ENCODE measurements at regions of chr16 and their contacts with region 1.

Region 1: DNA sequence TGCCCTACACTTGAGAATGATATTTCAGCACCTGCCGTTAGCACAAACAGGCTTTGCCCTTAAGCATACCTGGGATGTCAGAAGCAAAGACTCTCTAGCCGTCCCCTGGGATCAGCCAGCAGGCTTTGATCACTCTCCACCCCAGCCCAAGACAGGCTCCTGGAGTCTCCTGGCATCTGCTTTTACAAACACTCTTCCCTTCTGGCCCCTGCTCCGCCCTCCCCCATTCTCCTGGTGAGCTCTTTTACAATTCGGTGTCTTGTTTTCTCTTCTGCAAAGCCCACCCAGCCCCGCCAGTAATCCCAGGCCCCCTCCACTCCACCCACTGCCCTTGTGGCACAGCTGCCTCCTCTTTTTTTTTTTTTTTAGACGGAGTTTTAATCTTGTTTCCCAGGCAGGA is 50.4 kb downstream of the KATNIP start:
- DNase-seq: no peak
- H3K4me3 ChIP-seq: no peak overlapping the region
- H3K27ac ChIP-seq: no peak overlapping the region
- H3K4me1 ChIP-seq: no peaks in the 10 kb centered on the region
- H3K27me3 ChIP-seq: no peaks in the 10 kb centered on the region
- CTCF ChIP-seq: no peak
- POLR2A ChIP-seq: no peak

Region 2: DNA sequence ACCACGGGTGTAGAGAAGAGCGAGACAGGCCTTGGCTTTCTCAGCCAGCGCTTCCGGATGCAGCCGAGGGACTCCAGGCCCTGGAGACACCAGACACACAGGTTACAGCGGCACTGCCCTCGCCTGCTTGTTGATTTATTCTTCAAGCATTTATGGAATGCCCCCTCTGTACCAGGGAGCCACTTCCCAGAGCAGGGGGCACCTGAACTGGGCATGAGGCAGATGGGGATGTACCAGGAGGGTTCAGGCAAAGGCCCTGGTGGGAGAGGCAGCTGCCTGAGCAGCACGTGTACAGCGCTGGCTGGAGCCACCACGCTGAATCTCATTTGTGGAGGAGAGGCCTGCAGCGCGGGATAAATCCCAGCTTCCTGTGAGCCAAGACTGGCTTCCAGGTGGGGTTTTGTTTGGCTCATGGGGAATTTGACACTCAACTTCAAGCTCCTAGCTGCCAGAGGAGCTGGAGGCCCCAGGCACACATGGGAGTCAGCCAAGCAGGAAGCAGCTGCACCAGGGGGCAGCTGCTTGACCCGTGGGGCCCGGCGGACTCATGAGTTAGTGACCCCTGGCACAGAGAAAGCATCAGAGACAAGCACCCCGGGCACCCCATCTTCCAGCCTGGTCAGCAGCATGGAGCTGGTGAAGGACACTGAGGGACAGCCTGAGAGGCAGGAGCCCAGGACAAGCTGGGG is 138.8 kb before region 1 on chr16:
- intact Hi-C with region 1: no loop called
- DNase-seq: no peak
- H3K4me3 ChIP-seq: no peak overlapping the region
- H3K27ac ChIP-seq: peak overlapping the region in 2 of 5 donors; percentile 57 to 69
- H3K4me1 ChIP-seq: peaks cover 8 to 18% of the 10 kb centered on the region in 2 donors
- H3K27me3 ChIP-seq: no peaks in the 10 kb centered on the region
- CTCF ChIP-seq: no peak
- POLR2A ChIP-seq: no peak

Region 3: DNA sequence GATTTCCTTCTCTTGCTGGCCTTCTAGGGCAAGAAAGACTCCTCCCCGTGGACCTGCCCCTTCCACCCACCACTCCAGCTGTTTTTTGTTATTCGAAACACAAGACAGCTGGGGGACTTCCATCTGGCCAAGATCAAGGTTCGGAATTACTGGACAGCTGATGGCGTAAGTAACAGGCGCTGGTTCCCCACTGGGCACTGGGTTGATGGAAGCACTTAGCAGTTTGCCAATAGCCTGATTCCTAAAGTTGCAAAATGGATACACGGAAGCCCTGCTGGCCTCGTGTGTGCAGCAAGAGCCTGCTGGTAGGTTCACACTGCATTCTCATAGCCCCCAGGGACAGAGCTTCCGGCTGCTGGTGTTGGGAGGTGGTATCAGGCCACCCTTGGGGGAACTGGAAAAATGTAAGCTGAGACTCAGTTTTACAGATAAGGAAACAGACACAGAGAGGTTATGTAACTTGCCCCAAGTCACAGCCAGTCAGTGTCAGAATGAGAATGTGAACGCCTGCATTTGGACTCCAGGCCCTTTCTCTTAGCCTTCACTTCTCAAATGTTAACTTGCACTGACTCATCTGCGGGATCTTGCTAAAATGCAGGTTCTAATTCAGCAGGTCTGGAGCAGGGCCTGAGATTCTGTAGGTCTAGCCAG is 121.3 kb after region 1 on chr16:
- intact Hi-C with region 1: no loop called
- DNase-seq: peak in 6 of 7 donors; percentile 25 to 82 (median 52)
- H3K4me3 ChIP-seq: no peak overlapping the region
- H3K27ac ChIP-seq: peak overlapping the region in 2 of 5 donors; percentile 59 to 91
- H3K4me1 ChIP-seq: no peaks in the 10 kb centered on the region
- H3K27me3 ChIP-seq: no peaks in the 10 kb centered on the region
- CTCF ChIP-seq: no peak
- POLR2A ChIP-seq: no peak

Region 4: DNA sequence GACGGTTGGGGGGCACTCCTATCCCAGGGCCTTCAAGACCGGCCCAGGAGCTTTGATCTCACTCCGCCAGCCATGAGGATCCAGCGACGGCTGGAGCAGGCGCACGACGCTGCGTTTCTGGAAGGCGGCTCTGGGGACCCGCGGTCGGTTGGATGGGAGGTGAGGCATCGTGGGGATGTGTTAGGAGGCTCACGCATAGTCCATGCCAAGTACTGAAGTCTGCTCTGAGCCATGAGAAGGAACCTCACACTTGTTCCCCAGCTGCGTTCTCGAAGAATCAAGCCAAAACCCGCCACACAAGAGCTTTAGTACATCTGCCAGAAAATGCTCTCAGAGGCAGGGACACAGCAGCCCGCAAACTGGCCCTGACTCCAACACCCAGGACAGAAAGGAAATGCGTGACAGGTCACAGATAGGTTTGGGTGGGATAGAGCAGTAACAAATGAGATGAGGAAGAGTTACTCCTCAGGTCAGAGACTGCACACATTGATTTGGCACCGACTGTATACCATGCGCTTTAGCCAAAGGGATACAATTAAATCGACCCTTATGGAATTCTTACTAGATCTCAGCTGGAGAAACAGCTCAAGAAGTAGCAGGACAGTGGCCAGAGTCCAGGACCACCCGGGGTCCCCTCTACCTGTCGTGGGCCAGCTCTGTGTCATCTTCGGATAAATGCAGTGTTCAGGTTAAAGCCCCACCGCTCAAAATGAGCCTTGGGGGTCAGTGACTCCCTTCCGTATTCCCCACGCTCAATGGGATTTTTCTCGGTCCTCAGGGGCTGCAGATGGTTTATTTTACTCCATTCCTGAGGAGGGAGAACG is 469.8 kb after region 1 on chr16:
- intact Hi-C with region 1: loop called in 1 of 2 experiments (anchors 10 kb)
- DNase-seq: no peak
- H3K4me3 ChIP-seq: no peak overlapping the region
- H3K27ac ChIP-seq: no peak overlapping the region
- H3K4me1 ChIP-seq: no peaks in the 10 kb centered on the region
- H3K27me3 ChIP-seq: no peaks in the 10 kb centered on the region
- CTCF ChIP-seq: no peak
- POLR2A ChIP-seq: no peak